CD4-positive, alpha-beta memory T cell (primary cell): ENCODE measurements at regions of chr2 and their contacts with region 1.

Region 1: GRCh38 chr2:239275044-239275685 is 125.7 kb downstream of the HDAC4 start:
- DNase-seq: peak; percentile 86 to 96 (median 87)
- H3K4me3 ChIP-seq: peak overlapping the region; percentile 49 to 61
- H3K4me3 Mint-ChIP-seq: peak overlapping the region; percentile 86 to 94 (median 89)
- H3K27ac ChIP-seq: peak overlapping the region; percentile 75
- H3K27ac Mint-ChIP-seq: peak overlapping the region; percentile 90 to 99 (median 97)
- H3K4me1 ChIP-seq: peaks cover 38% of the 10 kb centered on the region
- H3K4me1 Mint-ChIP-seq: peaks cover 27 to 65% (median 39%) of the 10 kb centered on the region in 4 donors
- H3K27me3 ChIP-seq: no peaks in the 10 kb centered on the region
- H3K27me3 Mint-ChIP-seq: no peaks in the 10 kb centered on the region

Region 2: GRCh38 chr2:238963161-238963970 is 311.8 kb before region 1 on chr2:
- CTCF ChIA-PET with region 1: no interaction called
- POLR2A ChIA-PET with region 1: no interaction called
- intact Hi-C with region 1: no loop called
- DNase-seq: no peak
- H3K4me3 ChIP-seq: no peak overlapping the region
- H3K4me3 Mint-ChIP-seq: no peak overlapping the region
- H3K27ac ChIP-seq: no peak overlapping the region
- H3K27ac Mint-ChIP-seq: no peak overlapping the region
- H3K4me1 ChIP-seq: no peaks in the 10 kb centered on the region
- H3K4me1 Mint-ChIP-seq: no peaks in the 10 kb centered on the region
- H3K27me3 ChIP-seq: peaks cover 3% of the 10 kb centered on the region
- H3K27me3 Mint-ChIP-seq: peaks cover 8 to 12% of the 10 kb centered on the region in 2 donors

Region 3: GRCh38 chr2:239288951-239289511 is 13.9 kb after region 1 on chr2:
- CTCF ChIA-PET with region 1: interaction called, 196 read pairs
- POLR2A ChIA-PET with region 1: interaction called, 74 read pairs
- intact Hi-C with region 1: loop called (anchors 1 kb)
- DNase-seq: peak; percentile 61 to 76 (median 64)
- H3K4me3 ChIP-seq: peak overlapping the region in 1 of 2 donors; percentile 29
- H3K4me3 Mint-ChIP-seq: peak overlapping the region; percentile 63 to 86 (median 81)
- H3K27ac ChIP-seq: peak overlapping the region; percentile 54
- H3K27ac Mint-ChIP-seq: peak overlapping the region; percentile 86 to 99 (median 95)
- H3K4me1 ChIP-seq: peaks cover 81% of the 10 kb centered on the region
- H3K4me1 Mint-ChIP-seq: peaks cover 53 to 84% (median 68%) of the 10 kb centered on the region in 4 donors
- H3K27me3 ChIP-seq: no peaks in the 10 kb centered on the region
- H3K27me3 Mint-ChIP-seq: no peaks in the 10 kb centered on the region

Region 4: DNA sequence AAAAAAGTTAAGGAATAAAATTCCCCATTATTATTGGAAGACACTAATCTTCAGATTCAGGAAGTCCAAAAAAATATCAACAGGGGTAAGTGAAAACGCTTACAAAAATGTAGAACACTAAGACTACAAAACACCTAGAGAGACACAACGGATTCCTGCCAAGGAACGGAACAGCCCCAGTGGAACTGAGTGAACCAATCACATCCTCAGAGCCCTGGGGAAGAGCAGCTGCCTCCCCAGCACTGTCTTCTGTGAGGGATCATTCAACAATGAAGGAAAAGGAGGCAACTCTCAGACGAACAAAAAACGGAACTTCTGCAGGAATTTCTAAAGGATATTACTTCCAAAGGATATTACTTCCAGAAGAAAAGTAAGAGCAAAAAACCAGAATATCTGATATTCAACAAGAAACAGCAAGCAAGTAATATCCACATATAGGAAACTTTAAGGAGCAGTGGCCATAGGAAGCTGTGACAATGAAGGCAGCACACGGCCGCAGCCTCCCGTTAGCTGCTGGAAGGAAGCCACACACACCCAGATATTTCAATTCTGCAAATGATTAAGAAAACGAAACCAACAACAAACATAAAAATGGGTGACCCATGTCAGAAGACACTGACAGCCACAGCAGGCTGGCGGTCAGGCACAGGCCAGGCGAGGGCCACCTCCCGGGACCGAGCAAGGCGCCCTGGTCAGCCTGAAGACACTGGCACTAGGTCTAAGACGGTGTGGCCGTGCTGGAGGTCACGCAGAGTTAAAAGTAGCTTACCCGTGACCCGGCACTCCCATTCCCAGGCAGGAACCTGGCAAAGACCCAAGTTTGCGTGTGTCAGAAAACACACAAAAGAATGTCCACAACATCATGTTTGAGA is 43.9 kb after region 1 on chr2:
- CTCF ChIA-PET with region 1: interaction called, 3 read pairs
- POLR2A ChIA-PET with region 1: interaction called, 17 read pairs
- intact Hi-C with region 1: no loop called
- DNase-seq: no peak
- H3K4me3 ChIP-seq: peak overlapping the region in 1 of 2 donors; percentile 28
- H3K4me3 Mint-ChIP-seq: peak overlapping the region; percentile 73 to 93 (median 80)
- H3K27ac ChIP-seq: peak overlapping the region; percentile 49
- H3K27ac Mint-ChIP-seq: peak overlapping the region; percentile 81 to 96 (median 94)
- H3K4me1 ChIP-seq: peaks cover 44% of the 10 kb centered on the region
- H3K4me1 Mint-ChIP-seq: peaks cover 42 to 78% (median 55%) of the 10 kb centered on the region in 4 donors
- H3K27me3 ChIP-seq: no peaks in the 10 kb centered on the region
- H3K27me3 Mint-ChIP-seq: no peaks in the 10 kb centered on the region

Region 5: GRCh38 chr2:239369631-239370161 is 94.5 kb after region 1 on chr2:
- CTCF ChIA-PET with region 1: no interaction called
- POLR2A ChIA-PET with region 1: interaction called, 3 read pairs
- intact Hi-C with region 1: loop called (anchors 1 kb)
- DNase-seq: peak; percentile 80 to 95 (median 90)
- H3K4me3 ChIP-seq: peak overlapping the region in 1 of 2 donors; percentile 48
- H3K4me3 Mint-ChIP-seq: peak overlapping the region; percentile 77 to 92 (median 84)
- H3K27ac ChIP-seq: peak overlapping the region; percentile 82
- H3K27ac Mint-ChIP-seq: peak overlapping the region in 1 of 7 donors; percentile 99
- H3K4me1 ChIP-seq: peaks cover 39% of the 10 kb centered on the region
- H3K4me1 Mint-ChIP-seq: peaks cover 7 to 15% (median 11%) of the 10 kb centered on the region in 4 donors
- H3K27me3 ChIP-seq: no peaks in the 10 kb centered on the region
- H3K27me3 Mint-ChIP-seq: no peaks in the 10 kb centered on the region

Region 6: DNA sequence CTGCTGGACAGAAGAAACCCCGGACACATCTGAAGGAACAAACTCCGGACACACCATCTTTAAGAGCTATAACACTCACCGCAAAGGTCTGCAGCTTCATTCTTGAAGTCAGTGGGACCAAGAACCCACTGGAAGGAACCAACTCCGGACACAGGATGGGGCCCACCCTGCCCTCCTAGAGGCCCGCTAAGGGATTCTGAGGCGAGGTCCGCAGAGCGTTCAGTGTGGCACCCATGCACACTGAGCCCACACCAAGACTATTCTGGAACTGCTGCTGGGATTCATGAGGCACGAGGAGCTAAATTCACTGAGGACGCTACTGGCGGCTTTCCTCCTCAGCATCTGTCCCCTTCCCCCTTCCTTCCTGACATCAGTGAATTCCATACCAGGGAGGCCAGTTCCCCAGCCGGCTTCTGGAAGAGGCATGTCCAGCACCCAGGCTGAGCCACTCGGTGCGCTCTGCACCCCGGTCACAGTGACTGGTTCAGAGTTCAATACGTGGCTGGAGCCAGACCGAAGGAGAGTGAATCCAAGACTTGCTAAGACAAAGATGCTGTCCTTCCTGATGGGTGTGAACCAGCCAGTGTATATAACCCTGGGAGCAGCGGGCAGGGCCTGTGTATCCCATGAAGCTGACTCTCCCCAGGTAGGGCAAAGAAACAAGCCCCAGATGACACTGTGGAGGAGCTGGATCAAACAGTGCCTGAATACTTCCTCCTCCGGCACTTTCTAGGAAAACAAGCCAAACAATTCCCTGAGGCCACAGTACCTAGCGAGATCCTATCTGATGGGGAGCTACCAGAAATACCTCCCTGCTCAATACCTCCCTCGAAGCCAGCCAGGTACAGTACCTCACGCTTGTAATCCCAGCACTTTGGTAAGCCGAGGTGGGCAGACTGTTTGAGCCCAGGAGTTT is 114.5 kb after region 1 on chr2:
- CTCF ChIA-PET with region 1: no interaction called
- POLR2A ChIA-PET with region 1: no interaction called
- intact Hi-C with region 1: no loop called
- DNase-seq: no peak
- H3K4me3 ChIP-seq: no peak overlapping the region
- H3K4me3 Mint-ChIP-seq: no peak overlapping the region
- H3K27ac ChIP-seq: no peak overlapping the region
- H3K27ac Mint-ChIP-seq: peak overlapping the region in 1 of 7 donors; percentile 10
- H3K4me1 ChIP-seq: no peaks in the 10 kb centered on the region
- H3K4me1 Mint-ChIP-seq: peaks cover 3 to 13% (median 8%) of the 10 kb centered on the region in 4 donors
- H3K27me3 ChIP-seq: no peaks in the 10 kb centered on the region
- H3K27me3 Mint-ChIP-seq: no peaks in the 10 kb centered on the region